B cell (primary cell): ENCODE measurements at regions of chr7 and their contacts with region 1.

Region 1: GRCh38 chr7:25851332-25852210 is 300.4 kb upstream of the NFE2L3 start:
- DNase-seq: peak; percentile 79
- ATAC-seq: peak; percentile 73
- H3K4me3 ChIP-seq: no peak overlapping the region
- H3K4me3 Mint-ChIP-seq: peak overlapping the region; percentile 70
- H3K27ac ChIP-seq: no peak overlapping the region
- H3K27ac Mint-ChIP-seq: peak overlapping the region; percentile 79
- H3K4me1 ChIP-seq: peaks cover 15 to 36% of the 10 kb centered on the region in 2 donors
- H3K4me1 Mint-ChIP-seq: peaks cover 15% of the 10 kb centered on the region
- H3K27me3 ChIP-seq: peaks cover 0 to 57% (median 52%) of the 10 kb centered on the region in 4 experiments
- H3K27me3 Mint-ChIP-seq: peaks cover 64% of the 10 kb centered on the region
- CTCF ChIP-seq: peak; percentile 78

Region 2: GRCh38 chr7:25389489-25390106 is 462.0 kb before region 1 on chr7:
- CTCF ChIA-PET with region 1: interaction called, 4 read pairs
- POLR2A ChIA-PET with region 1: no interaction called
- intact Hi-C with region 1: loop called (anchors 2 kb)
- DNase-seq: peak; percentile 9
- ATAC-seq: no peak
- H3K4me3 ChIP-seq: no peak overlapping the region
- H3K4me3 Mint-ChIP-seq: no peak overlapping the region
- H3K27ac ChIP-seq: no peak overlapping the region
- H3K27ac Mint-ChIP-seq: no peak overlapping the region
- H3K4me1 ChIP-seq: no peaks in the 10 kb centered on the region
- H3K4me1 Mint-ChIP-seq: no peaks in the 10 kb centered on the region
- H3K27me3 ChIP-seq: peaks cover 0 to 9% (median 2%) of the 10 kb centered on the region in 4 experiments
- H3K27me3 Mint-ChIP-seq: peaks cover 21% of the 10 kb centered on the region
- CTCF ChIP-seq: no peak

Region 3: GRCh38 chr7:27242555-27243339 is 1391.2 kb after region 1 on chr7 and contains the start of gene EVX1:
- CTCF ChIA-PET with region 1: interaction called, 3 read pairs
- POLR2A ChIA-PET with region 1: no interaction called
- intact Hi-C with region 1: loop called (anchors 5 kb)
- DNase-seq: peak; percentile 58
- ATAC-seq: no peak
- H3K4me3 ChIP-seq: no peak within 1 kb of the TSS
- H3K4me3 Mint-ChIP-seq: peak within 1 kb of the TSS; percentile 41
- H3K27ac ChIP-seq: no peak within 1 kb of the TSS
- H3K27ac Mint-ChIP-seq: peak within 1 kb of the TSS; percentile 22
- H3K4me1 ChIP-seq: peaks cover 29 to 60% of the 10 kb centered on the region in 2 donors
- H3K4me1 Mint-ChIP-seq: peaks cover 23% of the 10 kb centered on the region
- H3K27me3 ChIP-seq: peaks cover 0 to 97% (median 72%) of the 10 kb centered on the region in 4 experiments
- H3K27me3 Mint-ChIP-seq: peaks cover 72% of the 10 kb centered on the region
- CTCF ChIP-seq: no peak
- total RNA-seq, gene EVX1: not detected in 2 replicates